A549 (cell line): ENCODE measurements at regions of chr12 and their contacts with region 1.

Region 1: DNA sequence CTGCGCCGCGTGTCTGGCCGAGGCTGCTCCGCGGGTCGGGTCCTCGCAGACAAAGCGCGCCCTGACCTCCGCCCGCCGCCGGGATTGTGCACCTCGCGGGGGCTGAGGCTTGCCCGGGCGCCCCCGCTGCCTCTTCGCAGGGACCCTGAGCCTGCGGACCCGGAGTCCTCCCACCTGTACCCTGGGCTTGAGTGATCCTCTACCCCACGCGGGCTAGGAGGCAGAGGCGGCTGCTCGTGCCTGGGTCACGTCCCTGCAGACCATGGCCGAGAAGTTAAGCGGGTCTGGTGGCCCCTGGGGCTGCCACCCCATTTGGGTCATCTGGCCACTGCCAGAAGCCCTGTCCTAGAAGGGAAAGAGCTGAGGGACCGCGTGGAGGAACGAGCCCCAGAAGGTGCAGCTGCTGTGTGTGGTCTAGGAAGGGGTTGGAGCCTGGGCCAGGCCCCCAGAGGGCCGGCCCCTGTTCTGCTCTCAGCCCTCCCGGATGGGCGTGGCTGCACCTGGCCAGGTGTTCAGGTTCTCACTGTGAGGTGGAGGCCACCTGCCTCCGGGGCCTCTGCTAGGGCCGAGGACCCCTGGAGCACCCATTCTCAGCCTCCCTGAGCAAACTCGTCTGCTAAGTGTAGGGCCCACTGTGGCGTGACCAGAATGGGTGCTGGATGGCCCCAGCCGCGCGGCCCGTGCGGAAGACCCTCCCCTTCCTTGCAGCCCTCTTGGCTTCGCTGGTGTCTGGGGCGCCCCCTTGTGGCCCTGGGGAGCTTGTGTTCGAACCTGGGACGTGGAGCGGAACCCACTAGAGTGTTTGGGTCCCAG is 49.6 kb downstream of the LRCOL1 start:
- DNase-seq: peak; percentile 82 to 89
- ATAC-seq: peak; percentile 54 to 83
- H3K4me3 ChIP-seq: peak overlapping the region; percentile 91
- H3K27ac ChIP-seq: peak overlapping the region; percentile 80 to 91; a peak in 5 of 6 replicates
- H3K4me1 ChIP-seq: peaks cover 10% of the 10 kb centered on the region; the same call in 2 of the 3 replicates
- CTCF ChIP-seq: peak; percentile 79
- EP300 ChIP-seq: no peak
- POLR2A ChIP-seq: no peak
- RAD21 ChIP-seq: peak; percentile 57 to 61

Region 2: DNA sequence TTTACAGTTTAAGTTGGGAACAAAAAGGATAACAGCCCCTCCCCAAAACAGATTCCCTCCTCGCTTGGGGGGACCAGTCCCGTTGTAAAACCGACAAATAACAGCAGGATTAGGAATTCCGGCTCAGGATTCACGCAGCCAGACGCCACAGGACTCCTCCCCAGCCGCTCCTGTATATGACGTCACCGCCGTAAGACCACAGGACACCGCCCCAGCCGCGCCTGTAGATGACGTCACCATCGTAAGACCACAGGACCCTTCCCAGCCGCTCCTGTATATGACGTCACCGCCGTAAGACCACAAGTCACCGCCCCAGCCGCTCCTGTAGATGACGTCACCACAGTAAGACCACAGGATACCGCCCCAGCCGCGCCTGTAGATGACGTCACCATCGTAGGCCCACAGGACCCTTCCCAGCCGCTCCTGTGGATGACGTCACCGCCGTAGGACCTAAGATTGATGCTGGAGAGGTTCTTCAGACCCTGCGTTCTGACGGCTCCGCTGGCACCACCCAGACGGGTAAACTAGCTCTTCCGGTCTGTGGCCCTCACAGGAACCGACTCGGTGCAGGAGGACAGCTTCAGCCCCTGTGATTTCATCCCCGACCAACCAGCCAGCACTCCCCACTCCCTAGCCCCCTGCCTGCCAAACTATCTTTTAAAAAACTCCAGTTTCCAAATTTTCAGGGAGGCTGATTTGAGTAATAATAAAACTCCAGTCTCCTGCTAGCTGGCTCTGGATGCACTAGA is 114.8 kb before region 1 on chr12:
- CTCF ChIA-PET with region 1: interaction called, 10 read pairs
- POLR2A ChIA-PET with region 1: no interaction called
- DNase-seq: peak; percentile 89 to 100
- ATAC-seq: peak; percentile 80 to 85
- H3K4me3 ChIP-seq: peak overlapping the region; percentile 74
- H3K27ac ChIP-seq: peak overlapping the region; percentile 80 to 88
- H3K4me1 ChIP-seq: no peaks in the 10 kb centered on the region
- CTCF ChIP-seq: no peak
- EP300 ChIP-seq: no peak
- POLR2A ChIP-seq: no peak; the same call in 1 of the 2 replicates
- RAD21 ChIP-seq: no peak

Region 3: GRCh38 chr12:132657004-132657683 is 96.3 kb after region 1 on chr12:
- CTCF ChIA-PET with region 1: no interaction called
- POLR2A ChIA-PET with region 1: no interaction called
- DNase-seq: no peak
- ATAC-seq: peak in 1 of 2 experiments; percentile 51; a peak in 3 of 6 replicates
- H3K4me3 ChIP-seq: no peak overlapping the region
- H3K27ac ChIP-seq: no peak overlapping the region
- H3K4me1 ChIP-seq: no peaks in the 10 kb centered on the region
- CTCF ChIP-seq: no peak
- EP300 ChIP-seq: no peak
- POLR2A ChIP-seq: no peak
- RAD21 ChIP-seq: no peak